Activated B cell treated with CpG ODN at 0.5 μM for 24 hours (primary cell): ENCODE measurements at regions of chr21 and their contacts with region 1.

Region 1: DNA sequence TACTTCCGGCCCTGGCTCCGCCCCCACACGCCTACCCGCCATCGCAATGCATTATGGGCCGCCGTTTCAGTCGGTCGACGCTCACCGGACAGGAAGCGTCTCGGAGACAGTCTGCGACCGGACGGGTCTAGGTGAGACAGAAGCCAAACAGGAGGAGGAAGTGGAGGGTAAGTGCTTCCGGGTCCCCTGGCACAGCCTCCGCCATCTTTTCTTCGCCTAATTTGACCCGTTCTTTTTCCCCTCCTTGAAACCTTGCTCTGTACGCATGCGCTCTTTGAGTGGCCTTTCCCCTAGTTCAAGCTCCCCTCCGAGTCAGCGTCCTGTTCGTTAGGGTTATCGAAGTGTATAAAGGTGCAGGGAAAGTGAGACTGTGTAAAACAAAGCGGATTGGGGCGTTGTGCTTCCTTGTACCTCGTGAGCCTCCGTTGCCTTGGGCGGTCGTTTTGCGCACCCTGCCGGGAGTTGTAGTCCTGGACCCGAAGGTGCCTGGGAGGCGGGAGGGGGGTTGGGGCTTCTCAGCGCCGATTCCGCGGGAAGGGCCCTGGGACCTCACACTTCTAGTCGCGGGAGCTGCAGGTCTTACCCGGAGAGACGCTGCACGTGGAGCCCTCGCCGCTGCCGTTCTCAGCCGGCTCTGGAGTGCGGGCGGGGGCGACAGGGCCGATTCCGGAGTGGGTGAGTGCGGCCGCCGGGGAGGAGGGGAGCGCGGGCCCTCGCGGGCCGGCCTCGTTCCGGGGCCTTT is at the starts of genes ATP5PF and GABPA:
- DNase-seq: peak; percentile 98
- ATAC-seq: peak; percentile 87
- H3K4me3 Mint-ChIP-seq: peak within 1 kb of the TSS; percentile 100
- H3K27ac Mint-ChIP-seq: peak within 1 kb of the TSS; percentile 100
- H3K4me1 Mint-ChIP-seq: peaks cover 61% of the 10 kb centered on the region
- H3K27me3 Mint-ChIP-seq: no peaks in the 10 kb centered on the region
- CTCF ChIP-seq: no peak
- total RNA-seq, gene ATP5PF: 73.9 and 78.3 TPM in 2 replicates
- total RNA-seq, gene GABPA: 31.3 and 34.6 TPM in 2 replicates

Region 2: GRCh38 chr21:25176637-25177412 is 558.2 kb before region 1 on chr21:
- CTCF ChIA-PET with region 1: no interaction called
- POLR2A ChIA-PET with region 1: no interaction called
- intact Hi-C with region 1: loop called (anchors 1 kb)
- DNase-seq: no peak
- ATAC-seq: peak; percentile 85
- H3K4me3 Mint-ChIP-seq: peak overlapping the region; percentile 0
- H3K27ac Mint-ChIP-seq: peak overlapping the region; percentile 91
- H3K4me1 Mint-ChIP-seq: peaks cover 70% of the 10 kb centered on the region
- H3K27me3 Mint-ChIP-seq: no peaks in the 10 kb centered on the region
- CTCF ChIP-seq: no peak

Region 3: DNA sequence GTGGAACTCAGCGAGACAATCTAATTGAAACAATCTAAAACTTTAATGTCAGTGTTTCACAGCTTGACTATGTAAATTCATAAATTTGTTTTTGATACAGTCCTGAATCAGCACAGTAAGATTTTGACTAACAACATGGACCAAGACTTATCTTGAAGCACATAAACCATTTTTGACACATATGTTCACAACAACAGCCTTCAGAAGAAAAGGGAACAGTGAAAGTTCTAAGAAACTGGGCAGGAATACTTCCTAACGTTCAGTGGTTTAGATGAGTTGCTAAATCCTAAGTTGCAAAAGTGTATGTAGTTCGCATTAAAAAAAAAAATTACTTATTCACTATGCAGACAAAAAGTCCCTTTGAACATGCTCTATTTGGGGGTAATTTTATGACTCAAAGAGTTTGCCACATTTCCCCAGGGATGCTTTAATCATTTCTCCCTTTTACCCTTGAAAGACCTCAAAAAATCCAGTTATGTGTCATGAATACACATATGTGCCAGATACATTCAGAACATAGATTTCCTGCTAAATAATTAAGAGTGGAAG is 248.0 kb before region 1 on chr21:
- CTCF ChIA-PET with region 1: no interaction called
- POLR2A ChIA-PET with region 1: interaction called, 3 read pairs
- intact Hi-C with region 1: loop called (anchors 1 kb)
- DNase-seq: no peak
- ATAC-seq: peak; percentile 85
- H3K4me3 Mint-ChIP-seq: peak overlapping the region; percentile 49
- H3K27ac Mint-ChIP-seq: peak overlapping the region; percentile 90
- H3K4me1 Mint-ChIP-seq: peaks cover 73% of the 10 kb centered on the region
- H3K27me3 Mint-ChIP-seq: no peaks in the 10 kb centered on the region
- CTCF ChIP-seq: no peak

Region 4: DNA sequence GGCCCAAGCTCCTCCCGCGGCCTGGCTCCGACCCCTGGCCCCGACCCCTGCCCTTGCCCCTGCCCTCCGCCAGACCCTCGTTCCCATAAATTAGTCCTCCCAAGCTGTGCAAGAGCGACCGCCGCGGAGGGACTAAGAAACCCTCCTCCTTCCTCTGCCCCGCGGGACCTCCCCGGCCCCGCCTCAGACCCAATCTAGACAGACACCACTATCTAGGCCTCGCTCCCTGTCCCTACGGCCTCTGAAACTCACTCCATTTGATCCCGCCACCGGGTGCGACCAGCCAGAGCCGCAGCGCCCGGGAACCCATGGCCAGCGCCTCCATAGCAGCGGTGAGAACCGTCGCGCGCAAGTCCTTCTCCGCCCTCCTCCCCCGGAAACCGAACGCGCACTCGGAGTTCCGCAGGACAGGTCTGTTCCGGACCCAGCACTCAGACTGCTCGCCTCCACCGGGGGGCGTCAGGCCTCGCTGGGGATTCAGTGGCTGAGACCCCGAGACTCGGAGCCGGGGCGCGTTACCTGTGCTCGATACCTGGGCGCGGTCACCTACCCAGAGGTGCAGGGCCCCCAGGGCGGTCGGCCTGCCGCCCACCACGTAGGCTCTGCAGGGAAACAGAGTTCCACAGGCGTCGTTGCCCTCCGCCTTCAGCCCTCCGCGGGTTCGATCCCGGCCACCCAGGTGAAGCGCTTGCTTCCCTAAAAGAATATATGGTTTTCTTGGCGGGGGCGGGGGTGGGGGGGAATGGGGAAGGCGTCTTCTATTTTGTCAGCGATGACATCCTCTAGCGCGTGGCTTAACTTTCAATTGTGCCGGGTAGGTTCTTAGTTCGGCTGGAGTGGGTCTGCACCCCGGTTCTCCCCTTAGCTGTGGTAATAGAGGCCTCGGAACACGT is 127.7 kb before region 1 on chr21 and contains the start of gene MRPL39:
- CTCF ChIA-PET with region 1: interaction called, 11 read pairs
- POLR2A ChIA-PET with region 1: interaction called, 25 read pairs
- intact Hi-C with region 1: loop called (anchors 1 kb)
- DNase-seq: peak; percentile 85
- ATAC-seq: peak; percentile 89
- H3K4me3 Mint-ChIP-seq: peak within 1 kb of the TSS; percentile 100
- H3K27ac Mint-ChIP-seq: peak within 1 kb of the TSS; percentile 99
- H3K4me1 Mint-ChIP-seq: peaks cover 35% of the 10 kb centered on the region
- H3K27me3 Mint-ChIP-seq: no peaks in the 10 kb centered on the region
- CTCF ChIP-seq: no peak
- total RNA-seq, gene MRPL39: 43.6 and 46.3 TPM in 2 replicates

Region 5: DNA sequence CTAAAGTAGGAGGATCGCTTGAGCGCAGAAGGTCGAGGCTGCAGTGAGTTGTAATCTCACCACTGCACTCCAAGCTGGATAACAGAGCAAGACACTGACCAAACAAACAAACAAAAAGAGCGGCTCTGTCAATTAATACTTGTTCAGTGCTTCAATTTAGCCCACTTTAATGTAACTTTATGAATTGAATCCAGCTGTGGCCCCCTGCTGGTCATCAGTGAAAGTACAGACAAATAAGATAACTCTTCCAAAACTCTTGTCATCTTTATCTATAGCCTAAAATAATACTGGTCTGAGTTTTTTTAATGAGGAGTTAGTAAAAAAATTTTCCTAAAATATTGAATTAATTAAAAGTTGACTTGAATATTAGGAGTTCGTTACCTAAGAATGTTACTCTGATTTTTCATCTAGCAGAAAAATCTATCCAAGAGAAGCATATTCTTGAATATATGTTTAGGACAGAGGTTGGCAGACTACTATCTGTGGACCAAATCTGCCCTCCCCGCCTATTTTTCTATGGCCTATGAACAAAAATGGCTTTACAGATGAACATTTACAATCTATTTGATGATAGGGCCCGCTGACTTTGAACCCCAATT is 26.5 kb before region 1 on chr21:
- CTCF ChIA-PET with region 1: no interaction called
- POLR2A ChIA-PET with region 1: no interaction called
- intact Hi-C with region 1: loop called (anchors 1 kb)
- DNase-seq: no peak
- ATAC-seq: peak; percentile 34
- H3K4me3 Mint-ChIP-seq: no peak overlapping the region
- H3K27ac Mint-ChIP-seq: no peak overlapping the region
- H3K4me1 Mint-ChIP-seq: no peaks in the 10 kb centered on the region
- H3K27me3 Mint-ChIP-seq: no peaks in the 10 kb centered on the region
- CTCF ChIP-seq: peak; percentile 94

Region 6: GRCh38 chr21:25967573-25968438 is 232.7 kb after region 1 on chr21:
- CTCF ChIA-PET with region 1: no interaction called
- POLR2A ChIA-PET with region 1: no interaction called
- intact Hi-C with region 1: loop called (anchors 1 kb)
- DNase-seq: no peak
- ATAC-seq: peak; percentile 95
- H3K4me3 Mint-ChIP-seq: peak overlapping the region; percentile 24
- H3K27ac Mint-ChIP-seq: peak overlapping the region; percentile 93
- H3K4me1 Mint-ChIP-seq: peaks cover 32% of the 10 kb centered on the region
- H3K27me3 Mint-ChIP-seq: no peaks in the 10 kb centered on the region
- CTCF ChIP-seq: no peak

Region 7: GRCh38 chr21:26437326-26438009 is 702.4 kb after region 1 on chr21:
- CTCF ChIA-PET with region 1: no interaction called
- POLR2A ChIA-PET with region 1: no interaction called
- intact Hi-C with region 1: no loop called
- DNase-seq: no peak
- ATAC-seq: no peak
- H3K4me3 Mint-ChIP-seq: no peak overlapping the region
- H3K27ac Mint-ChIP-seq: no peak overlapping the region
- H3K4me1 Mint-ChIP-seq: no peaks in the 10 kb centered on the region
- H3K27me3 Mint-ChIP-seq: no peaks in the 10 kb centered on the region
- CTCF ChIP-seq: no peak